Activated CD8-positive, alpha-beta memory T cell treated with anti-CD3 and anti-CD28 coated beads, Interleukin-2, amount 10 ng/mL, durations not matched to agents 7 days and 5 days (primary cell): ENCODE measurements at regions of chr1 and their contacts with region 1.

Region 1: DNA sequence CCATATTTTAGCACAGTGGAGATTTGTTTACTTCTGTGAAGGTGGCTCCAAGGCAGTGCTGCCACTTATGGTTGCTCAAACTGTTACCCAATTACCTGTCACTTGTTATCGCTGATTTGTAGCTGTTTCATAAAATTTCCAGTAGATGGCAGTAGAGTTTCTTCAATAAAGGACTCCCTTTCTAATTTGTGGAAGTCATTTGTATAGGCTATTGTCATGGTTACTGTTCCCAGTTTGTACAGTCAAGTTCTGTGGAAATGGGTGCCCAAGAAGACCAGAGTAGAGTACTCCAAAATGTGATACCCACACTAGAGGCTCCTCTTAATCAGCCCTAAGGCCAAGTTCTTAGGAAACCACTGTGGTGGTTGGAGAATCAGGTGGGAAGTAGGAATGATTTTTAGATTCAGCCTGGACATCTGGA is 186.1 kb downstream of the CLEC20A start:
- DNase-seq: no peak
- ATAC-seq: peak; percentile 39
- H3K4me3 Mint-ChIP-seq: no peak overlapping the region
- H3K27ac Mint-ChIP-seq: no peak overlapping the region
- H3K4me1 Mint-ChIP-seq: no peaks in the 10 kb centered on the region
- H3K27me3 Mint-ChIP-seq: peaks cover 7% of the 10 kb centered on the region

Region 2: DNA sequence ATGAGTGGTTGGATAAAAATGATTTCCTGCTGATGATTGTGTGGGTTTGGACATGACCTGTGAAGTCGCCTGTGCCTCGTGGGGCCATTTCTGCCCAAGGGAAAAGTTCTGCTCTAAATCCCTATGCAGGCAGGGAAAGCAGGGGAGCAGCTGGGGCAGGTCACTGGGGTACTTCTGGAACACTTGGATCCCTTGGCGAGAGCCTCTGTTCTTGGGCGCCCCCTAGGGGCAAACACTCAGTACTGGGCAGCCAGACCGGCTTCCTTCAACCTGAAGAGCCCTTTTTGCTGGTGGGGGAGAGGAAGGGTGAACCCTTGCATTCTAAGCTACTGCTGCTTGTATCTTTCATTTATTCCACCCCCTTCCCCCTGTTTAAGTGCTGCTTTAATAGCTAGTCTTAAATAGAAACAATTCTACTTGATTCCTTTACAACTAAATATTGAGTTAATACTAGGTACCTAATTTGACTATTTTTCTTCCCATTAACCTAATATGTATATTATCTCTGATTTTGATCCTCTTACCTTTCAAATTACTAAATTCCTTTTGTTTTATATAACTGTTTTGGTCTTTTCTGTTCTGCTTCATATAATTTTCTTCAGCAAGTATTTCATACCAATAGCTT is 191.1 kb after region 1 on chr1:
- CTCF ChIA-PET with region 1: interaction called, 17 read pairs
- DNase-seq: peak; percentile 66
- ATAC-seq: peak; percentile 64
- H3K4me3 Mint-ChIP-seq: no peak overlapping the region
- H3K27ac Mint-ChIP-seq: no peak overlapping the region
- H3K4me1 Mint-ChIP-seq: no peaks in the 10 kb centered on the region
- H3K27me3 Mint-ChIP-seq: no peaks in the 10 kb centered on the region

Region 3: DNA sequence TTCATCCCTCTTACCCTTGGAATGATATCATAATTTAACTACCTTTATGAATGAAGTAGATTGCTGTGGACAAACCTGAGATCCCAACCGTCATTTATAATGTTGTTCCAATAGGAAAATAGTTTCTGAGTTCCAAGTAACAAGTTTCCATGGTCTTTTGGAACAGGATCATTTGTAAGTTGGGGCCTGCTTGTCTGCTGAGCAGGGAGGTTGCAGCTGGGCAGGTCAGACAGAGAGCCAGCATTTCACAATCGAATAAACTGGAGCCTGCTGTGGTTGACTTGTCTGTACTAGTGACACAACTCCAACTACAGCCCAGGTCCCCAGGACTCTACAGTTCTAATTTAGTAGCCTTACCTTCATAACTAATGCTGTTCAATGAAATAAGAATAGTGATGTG is 395.7 kb after region 1 on chr1:
- CTCF ChIA-PET with region 1: no interaction called
- DNase-seq: no peak
- ATAC-seq: no peak
- H3K4me3 Mint-ChIP-seq: no peak overlapping the region
- H3K27ac Mint-ChIP-seq: no peak overlapping the region
- H3K4me1 Mint-ChIP-seq: no peaks in the 10 kb centered on the region
- H3K27me3 Mint-ChIP-seq: peaks cover 25% of the 10 kb centered on the region